ENCODE measurements at regions of chr11 and their contacts with region 1.

Region 1: GRCh38 chr11:33742249-33742851 is 6.1 kb upstream of the CD59 start:
- H3K4me3 ChIP-seq: no peak overlapping the region
- H3K27ac ChIP-seq: no peak overlapping the region
- H3K4me1 ChIP-seq: no peaks in the 10 kb centered on the region
- CTCF ChIP-seq: no peak

Region 2: DNA sequence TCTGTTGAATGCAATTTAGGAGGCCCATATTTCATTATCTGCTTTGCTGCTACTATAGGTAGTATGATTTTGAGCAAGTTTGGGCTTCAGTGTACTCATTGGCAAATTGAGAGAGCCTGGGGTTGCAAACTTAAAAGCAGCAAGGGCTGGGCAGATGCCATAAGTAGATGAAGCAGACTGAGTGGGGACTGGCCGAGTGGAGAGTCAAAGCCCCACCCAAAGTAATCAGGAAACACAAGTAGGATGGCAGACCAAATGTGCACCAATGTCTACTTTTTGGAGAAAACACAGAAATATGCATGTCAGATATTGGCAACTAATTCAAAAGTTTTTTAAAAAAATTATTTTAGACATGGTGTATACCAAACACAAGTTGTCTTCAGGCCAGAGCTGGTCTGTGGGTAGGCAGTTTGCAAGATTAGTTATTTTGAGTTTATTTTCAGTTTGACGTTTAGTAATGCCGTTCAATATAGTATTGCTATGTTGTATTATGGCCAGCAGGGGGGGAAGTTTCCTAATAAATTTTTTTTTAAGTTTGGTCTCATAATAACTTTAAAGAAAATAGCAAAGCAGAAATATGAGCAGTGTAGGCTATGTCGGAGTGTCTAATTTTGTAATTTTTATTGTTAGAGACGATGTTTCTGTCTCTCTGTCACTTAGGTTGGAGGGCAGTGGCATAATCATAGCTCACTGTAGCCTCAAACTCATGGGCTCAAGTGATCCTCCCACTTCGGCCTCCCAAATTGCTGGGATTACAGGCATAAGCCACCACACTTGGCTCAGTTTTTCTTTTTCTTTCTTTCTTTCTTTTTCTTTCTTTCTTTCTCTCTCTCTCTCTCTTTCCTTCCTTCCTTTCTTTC is 380.1 kb before region 1 on chr11:
- CTCF ChIA-PET with region 1: interaction called, 14 read pairs
- POLR2A ChIA-PET with region 1: no interaction called
- H3K4me3 ChIP-seq: no peak overlapping the region
- H3K27ac ChIP-seq: no peak overlapping the region
- H3K4me1 ChIP-seq: no peaks in the 10 kb centered on the region
- CTCF ChIP-seq: no peak

Region 3: DNA sequence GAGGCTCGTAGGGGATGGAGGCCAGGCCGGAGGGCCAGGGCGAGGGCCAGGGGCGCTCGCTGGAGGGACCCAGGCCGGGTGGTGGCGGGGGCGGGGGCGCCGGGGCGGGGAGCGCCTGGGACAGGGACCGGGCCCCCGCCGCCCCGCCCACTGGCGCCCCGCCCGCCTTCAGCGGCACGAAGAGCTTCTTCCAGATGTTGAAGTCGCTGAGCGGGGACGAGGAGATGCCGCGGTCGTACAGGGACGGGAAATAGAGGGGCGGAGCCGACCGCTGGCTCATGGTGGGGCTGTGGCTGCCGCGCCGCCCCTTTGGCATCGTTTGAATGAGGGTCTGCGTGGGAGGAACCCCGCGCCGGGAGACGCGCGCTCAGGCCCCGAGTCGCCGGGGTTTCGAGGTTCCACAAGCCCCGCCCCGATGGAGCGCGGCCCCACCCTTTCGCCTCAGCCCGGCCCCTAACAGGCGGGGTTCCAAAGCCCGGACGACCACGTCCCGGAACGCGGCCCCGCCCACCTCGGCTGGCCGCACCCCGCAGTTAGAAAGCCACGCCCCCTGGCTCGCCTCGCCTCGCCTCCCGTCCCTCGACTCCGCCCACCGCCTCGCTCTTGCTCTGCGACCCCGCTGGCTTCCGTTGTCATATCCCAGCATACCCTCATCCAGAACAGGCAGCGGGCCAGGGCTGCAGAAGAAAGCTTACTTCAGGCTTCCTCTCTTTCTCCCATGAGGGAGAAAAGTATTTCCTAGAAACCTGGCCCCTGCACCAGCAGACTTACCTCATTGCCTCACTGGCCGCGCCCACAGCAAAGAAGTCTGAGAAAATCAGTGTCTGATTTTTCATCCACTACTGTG is 41.7 kb before region 1 on chr11 and contains the start of gene C11orf91:
- CTCF ChIA-PET with region 1: interaction called, 11 read pairs
- POLR2A ChIA-PET with region 1: interaction called, 6 read pairs
- H3K4me3 ChIP-seq: peak within 1 kb of the TSS; percentile 62
- H3K27ac ChIP-seq: no peak within 1 kb of the TSS
- H3K4me1 ChIP-seq: no peaks in the 10 kb centered on the region
- CTCF ChIP-seq: no peak

Region 4: GRCh38 chr11:33874910-33875490 is 132.7 kb after region 1 on chr11:
- CTCF ChIA-PET with region 1: no interaction called
- POLR2A ChIA-PET with region 1: no interaction called
- H3K4me3 ChIP-seq: no peak overlapping the region
- H3K27ac ChIP-seq: no peak overlapping the region
- H3K4me1 ChIP-seq: no peaks in the 10 kb centered on the region
- CTCF ChIP-seq: no peak

Measured in HEK293 (cell line).